ENCODE measurements at regions of chr20 and their contacts with region 1.

Region 1: DNA sequence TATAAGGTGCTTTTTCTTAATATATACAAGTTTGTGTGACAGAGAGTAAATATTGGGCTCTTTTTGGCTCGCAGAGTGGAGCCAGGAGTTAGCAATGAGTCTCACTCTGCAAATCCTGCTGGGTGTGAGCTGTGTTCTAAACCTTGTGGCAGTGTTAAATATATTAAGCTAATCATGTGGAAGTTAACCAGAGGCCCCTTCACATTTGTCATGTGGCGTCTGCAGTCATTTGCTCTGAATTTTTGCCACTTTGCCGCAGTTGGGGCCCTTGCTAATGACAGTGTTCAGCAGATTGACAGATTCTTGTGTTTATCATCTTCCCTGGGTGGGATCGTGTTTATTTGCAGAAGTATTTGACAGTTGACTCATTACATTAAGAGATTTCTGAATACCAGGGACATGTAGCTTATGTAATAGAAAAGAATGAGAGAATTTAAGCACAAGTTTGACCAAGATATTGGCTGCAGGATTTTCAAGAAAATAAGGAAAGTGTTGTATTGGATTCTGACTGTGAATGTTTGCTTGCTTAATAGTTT is 37.9 kb downstream of the SPATA2 start:
- DNase-seq: no peak
- H3K27ac ChIP-seq: no peak overlapping the region
- CTCF ChIP-seq: no peak

Region 2: GRCh38 chr20:49585585-49586245 is 291.7 kb before region 1 on chr20:
- CTCF ChIA-PET with region 1: interaction called, 14 read pairs
- POLR2A ChIA-PET with region 1: no interaction called
- DNase-seq: no peak
- H3K27ac ChIP-seq: no peak overlapping the region
- CTCF ChIP-seq: no peak

Region 3: GRCh38 chr20:50012282-50013263 is 135.1 kb after region 1 on chr20:
- CTCF ChIA-PET with region 1: no interaction called
- POLR2A ChIA-PET with region 1: no interaction called
- DNase-seq: no peak
- H3K27ac ChIP-seq: no peak overlapping the region
- CTCF ChIP-seq: no peak

Measured in RWPE1 (cell line).